B cell (primary cell): ENCODE measurements at regions of chr6 and their contacts with region 1.

Region 1: GRCh38 chr6:34414999-34415858 is 10.6 kb downstream of the RPS10 start:
- DNase-seq: peak; percentile 78
- ATAC-seq: peak; percentile 85
- H3K4me3 ChIP-seq: no peak overlapping the region
- H3K4me3 Mint-ChIP-seq: no peak overlapping the region
- H3K27ac ChIP-seq: no peak overlapping the region
- H3K27ac Mint-ChIP-seq: no peak overlapping the region
- H3K4me1 ChIP-seq: peaks cover 0 to 4% of the 10 kb centered on the region in 2 donors
- H3K4me1 Mint-ChIP-seq: peaks cover 4% of the 10 kb centered on the region
- H3K27me3 ChIP-seq: no peaks in the 10 kb centered on the region
- H3K27me3 Mint-ChIP-seq: no peaks in the 10 kb centered on the region
- CTCF ChIP-seq: peak; percentile 73

Region 2: DNA sequence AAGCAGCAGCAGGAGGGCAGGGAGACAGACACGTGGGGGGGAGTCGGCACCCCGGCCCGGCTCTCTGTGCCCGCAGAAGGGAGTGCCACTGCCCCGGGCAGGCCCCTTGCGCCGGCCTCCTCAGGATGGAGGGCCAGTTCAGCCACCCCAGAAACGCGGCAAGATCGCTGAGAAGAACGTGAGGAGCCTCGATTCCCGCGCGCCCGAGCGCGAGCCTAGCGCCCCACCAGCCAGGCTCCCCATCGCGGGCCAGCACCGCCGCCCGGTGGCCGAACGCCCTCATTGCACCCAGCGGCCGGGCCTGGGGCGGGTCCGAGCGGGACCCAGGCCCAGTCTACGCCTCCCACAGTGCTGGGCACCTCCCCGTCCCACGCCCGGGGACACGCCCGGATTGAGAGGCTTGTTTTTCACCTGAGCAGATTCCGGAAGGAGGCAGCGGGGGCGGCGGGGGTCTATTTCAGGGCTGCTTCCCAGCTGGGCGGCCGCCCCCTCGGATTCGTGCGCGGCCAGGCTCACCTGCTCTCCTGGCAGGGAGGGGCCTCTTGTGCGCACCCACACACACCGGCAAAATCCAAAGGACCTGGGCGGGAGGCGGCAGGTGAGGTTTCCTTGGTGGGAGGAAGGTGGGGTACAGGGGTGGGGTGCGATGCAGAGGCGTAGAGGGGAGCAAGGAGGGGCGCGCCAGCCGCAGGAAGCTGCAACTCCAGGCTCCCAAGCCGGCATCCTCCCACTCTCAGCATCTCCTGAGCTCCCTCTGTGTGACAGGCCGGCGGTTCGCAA is 260.4 kb before region 1 on chr6:
- CTCF ChIA-PET with region 1: interaction called, 10 read pairs
- POLR2A ChIA-PET with region 1: no interaction called
- intact Hi-C with region 1: no loop called
- DNase-seq: peak; percentile 76
- ATAC-seq: peak; percentile 94
- H3K4me3 ChIP-seq: peak overlapping the region in 3 of 5 experiments; percentile 33 to 39 (median 36)
- H3K4me3 Mint-ChIP-seq: peak overlapping the region; percentile 55
- H3K27ac ChIP-seq: no peak overlapping the region
- H3K27ac Mint-ChIP-seq: no peak overlapping the region
- H3K4me1 ChIP-seq: peaks cover 14 to 21% of the 10 kb centered on the region in 2 donors
- H3K4me1 Mint-ChIP-seq: peaks cover 16% of the 10 kb centered on the region
- H3K27me3 ChIP-seq: peaks cover 0 to 46% (median 18%) of the 10 kb centered on the region in 4 experiments
- H3K27me3 Mint-ChIP-seq: peaks cover 42% of the 10 kb centered on the region
- CTCF ChIP-seq: peak; percentile 99

Region 3: GRCh38 chr6:34189806-34190503 is 225.3 kb before region 1 on chr6:
- CTCF ChIA-PET with region 1: interaction called, 121 read pairs
- POLR2A ChIA-PET with region 1: no interaction called
- intact Hi-C with region 1: no loop called
- DNase-seq: peak; percentile 84
- ATAC-seq: peak; percentile 97
- H3K4me3 ChIP-seq: no peak overlapping the region
- H3K4me3 Mint-ChIP-seq: no peak overlapping the region
- H3K27ac ChIP-seq: peak overlapping the region; percentile 18 to 43
- H3K27ac Mint-ChIP-seq: peak overlapping the region; percentile 85
- H3K4me1 ChIP-seq: peaks cover 13 to 14% of the 10 kb centered on the region in 2 donors
- H3K4me1 Mint-ChIP-seq: peaks cover 13% of the 10 kb centered on the region
- H3K27me3 ChIP-seq: no peaks in the 10 kb centered on the region
- H3K27me3 Mint-ChIP-seq: no peaks in the 10 kb centered on the region
- CTCF ChIP-seq: peak; percentile 19

Region 4: GRCh38 chr6:34218448-34219090 is 196.7 kb before region 1 on chr6:
- CTCF ChIA-PET with region 1: interaction called, 11 read pairs
- POLR2A ChIA-PET with region 1: no interaction called
- intact Hi-C with region 1: no loop called
- DNase-seq: no peak
- ATAC-seq: no peak
- H3K4me3 ChIP-seq: no peak overlapping the region
- H3K4me3 Mint-ChIP-seq: no peak overlapping the region
- H3K27ac ChIP-seq: no peak overlapping the region
- H3K27ac Mint-ChIP-seq: no peak overlapping the region
- H3K4me1 ChIP-seq: peaks cover 5 to 11% of the 10 kb centered on the region in 2 donors
- H3K4me1 Mint-ChIP-seq: peaks cover 19% of the 10 kb centered on the region
- H3K27me3 ChIP-seq: no peaks in the 10 kb centered on the region
- H3K27me3 Mint-ChIP-seq: no peaks in the 10 kb centered on the region
- CTCF ChIP-seq: no peak

Region 5: DNA sequence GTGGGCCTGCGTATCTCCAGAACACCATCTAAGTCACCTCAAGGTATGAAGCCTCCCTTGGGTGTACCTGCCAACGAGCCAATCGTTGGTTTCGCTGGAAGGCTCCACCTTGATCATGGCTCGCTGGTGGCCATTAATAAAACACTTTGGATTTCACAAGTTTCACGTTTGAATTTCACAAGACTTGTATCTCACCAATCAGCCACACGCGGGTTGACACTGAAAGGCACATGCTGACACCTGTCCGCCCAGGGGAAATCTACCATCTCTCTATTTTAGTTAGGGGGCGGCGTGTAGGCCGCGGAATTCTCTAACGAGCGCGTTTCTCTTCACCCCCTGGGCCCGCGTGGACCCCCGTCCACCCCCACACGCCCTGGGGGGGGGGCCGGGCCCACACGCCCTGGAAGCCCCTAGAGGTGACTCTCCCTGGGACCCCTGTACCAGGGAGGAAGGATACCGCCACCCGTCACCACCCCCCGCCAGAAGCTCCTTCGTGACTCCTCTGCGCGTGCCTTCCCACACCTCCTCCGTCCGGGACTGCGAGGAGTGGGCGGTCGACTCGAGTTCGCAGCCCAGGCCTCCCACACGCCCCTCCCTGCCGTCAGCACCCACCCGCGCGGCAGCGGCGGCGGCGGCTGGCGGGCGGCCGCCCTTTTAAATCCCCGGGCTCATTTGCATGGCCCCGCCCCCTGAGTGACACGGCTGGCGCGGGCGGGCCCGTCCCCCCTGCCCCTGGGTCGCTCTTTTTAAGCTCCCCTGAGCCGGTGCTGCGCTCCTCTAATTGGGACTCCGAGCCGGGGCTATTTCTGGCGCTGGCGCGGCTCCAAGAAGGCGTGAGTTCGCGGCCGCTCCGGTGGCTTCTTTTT is 178.9 kb before region 1 on chr6 and contains the start of gene HMGA1:
- CTCF ChIA-PET with region 1: interaction called, 14 read pairs
- POLR2A ChIA-PET with region 1: interaction called, 5 read pairs
- intact Hi-C with region 1: no loop called
- DNase-seq: peak; percentile 96
- ATAC-seq: peak; percentile 76
- H3K4me3 ChIP-seq: peak within 1 kb of the TSS; percentile 64 to 93 (median 88)
- H3K4me3 Mint-ChIP-seq: peak within 1 kb of the TSS; percentile 92
- H3K27ac ChIP-seq: peak within 1 kb of the TSS; percentile 96 to 98
- H3K27ac Mint-ChIP-seq: peak within 1 kb of the TSS; percentile 98
- H3K4me1 ChIP-seq: peaks cover 22 to 30% of the 10 kb centered on the region in 2 donors
- H3K4me1 Mint-ChIP-seq: peaks cover 34% of the 10 kb centered on the region
- H3K27me3 ChIP-seq: no peaks in the 10 kb centered on the region
- H3K27me3 Mint-ChIP-seq: no peaks in the 10 kb centered on the region
- CTCF ChIP-seq: no peak
- total RNA-seq, gene HMGA1: 66.4 and 72.3 TPM in 2 replicates

Region 6: GRCh38 chr6:34425498-34426410 is 10.5 kb after region 1 on chr6 and contains the start of gene RPS10:
- CTCF ChIA-PET with region 1: interaction called, 30 read pairs
- POLR2A ChIA-PET with region 1: interaction called, 7 read pairs
- intact Hi-C with region 1: loop called (anchors 1 kb)
- DNase-seq: peak; percentile 94
- ATAC-seq: peak; percentile 99
- H3K4me3 ChIP-seq: peak within 1 kb of the TSS; percentile 80 to 94 (median 90)
- H3K4me3 Mint-ChIP-seq: peak within 1 kb of the TSS; percentile 86
- H3K27ac ChIP-seq: peak within 1 kb of the TSS; percentile 77 to 82
- H3K27ac Mint-ChIP-seq: peak within 1 kb of the TSS; percentile 95
- H3K4me1 ChIP-seq: peaks cover 10 to 23% of the 10 kb centered on the region in 2 donors
- H3K4me1 Mint-ChIP-seq: peaks cover 21% of the 10 kb centered on the region
- H3K27me3 ChIP-seq: no peaks in the 10 kb centered on the region
- H3K27me3 Mint-ChIP-seq: no peaks in the 10 kb centered on the region
- CTCF ChIP-seq: no peak
- total RNA-seq, gene RPS10: 2,661 and 2,707 TPM in 2 replicates

Region 7: GRCh38 chr6:34484899-34485298 is 69.7 kb after region 1 on chr6:
- CTCF ChIA-PET with region 1: no interaction called
- POLR2A ChIA-PET with region 1: no interaction called
- intact Hi-C with region 1: no loop called
- DNase-seq: peak; percentile 22
- ATAC-seq: peak; percentile 76
- H3K4me3 ChIP-seq: no peak overlapping the region
- H3K4me3 Mint-ChIP-seq: no peak overlapping the region
- H3K27ac ChIP-seq: no peak overlapping the region
- H3K27ac Mint-ChIP-seq: no peak overlapping the region
- H3K4me1 ChIP-seq: peaks cover 6 to 8% of the 10 kb centered on the region in 2 donors
- H3K4me1 Mint-ChIP-seq: peaks cover 12% of the 10 kb centered on the region
- H3K27me3 ChIP-seq: no peaks in the 10 kb centered on the region
- H3K27me3 Mint-ChIP-seq: no peaks in the 10 kb centered on the region
- CTCF ChIP-seq: no peak

Region 8: DNA sequence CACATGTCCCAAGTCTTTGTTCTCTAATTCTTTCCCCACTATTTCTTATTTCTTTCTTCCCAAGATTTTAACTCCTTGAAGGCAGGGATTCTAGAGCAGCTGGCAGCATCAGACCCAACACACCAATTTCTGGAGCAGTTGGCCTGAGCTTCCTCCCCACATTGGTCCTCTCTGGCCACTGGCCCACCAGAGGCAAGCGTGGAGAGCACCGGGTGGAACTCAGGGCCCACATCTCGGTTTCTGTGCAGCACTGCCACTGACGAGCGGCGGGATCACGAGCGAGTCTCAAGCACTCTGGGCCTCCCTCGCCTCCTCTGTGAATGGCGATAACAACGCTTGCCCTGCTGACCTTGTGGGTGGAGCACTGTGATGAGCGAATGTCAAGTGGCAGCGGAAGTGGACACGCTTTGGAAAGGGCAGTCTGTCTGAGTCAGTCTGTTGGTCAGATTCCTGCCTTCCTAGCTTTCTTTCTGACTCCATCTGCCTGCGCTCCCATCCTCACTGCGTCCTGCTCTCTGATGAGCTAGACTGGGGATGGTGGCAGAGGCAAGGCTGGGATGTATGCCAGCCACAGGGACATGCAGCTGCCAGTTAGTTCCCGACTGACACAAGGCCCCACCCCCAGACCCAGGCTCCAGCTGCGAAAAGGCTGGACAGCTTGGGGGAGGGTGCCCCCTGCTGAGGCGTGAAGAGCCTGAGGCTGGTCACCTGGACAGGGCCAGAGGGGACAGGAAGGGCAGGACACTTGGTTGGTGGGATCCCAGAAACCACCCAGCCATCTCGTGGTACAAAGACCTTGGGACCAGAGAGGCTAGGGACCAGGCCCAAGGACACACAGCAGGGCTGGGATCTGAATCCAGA is 145.4 kb after region 1 on chr6:
- CTCF ChIA-PET with region 1: no interaction called
- POLR2A ChIA-PET with region 1: no interaction called
- intact Hi-C with region 1: no loop called
- DNase-seq: no peak
- ATAC-seq: no peak
- H3K4me3 ChIP-seq: no peak overlapping the region
- H3K4me3 Mint-ChIP-seq: no peak overlapping the region
- H3K27ac ChIP-seq: no peak overlapping the region
- H3K27ac Mint-ChIP-seq: no peak overlapping the region
- H3K4me1 ChIP-seq: no peaks in the 10 kb centered on the region
- H3K4me1 Mint-ChIP-seq: no peaks in the 10 kb centered on the region
- H3K27me3 ChIP-seq: no peaks in the 10 kb centered on the region
- H3K27me3 Mint-ChIP-seq: no peaks in the 10 kb centered on the region
- CTCF ChIP-seq: no peak